Ovary (tissue), 10 donors: ENCODE measurements at regions of chr1 and their contacts with region 1.

Region 1: DNA sequence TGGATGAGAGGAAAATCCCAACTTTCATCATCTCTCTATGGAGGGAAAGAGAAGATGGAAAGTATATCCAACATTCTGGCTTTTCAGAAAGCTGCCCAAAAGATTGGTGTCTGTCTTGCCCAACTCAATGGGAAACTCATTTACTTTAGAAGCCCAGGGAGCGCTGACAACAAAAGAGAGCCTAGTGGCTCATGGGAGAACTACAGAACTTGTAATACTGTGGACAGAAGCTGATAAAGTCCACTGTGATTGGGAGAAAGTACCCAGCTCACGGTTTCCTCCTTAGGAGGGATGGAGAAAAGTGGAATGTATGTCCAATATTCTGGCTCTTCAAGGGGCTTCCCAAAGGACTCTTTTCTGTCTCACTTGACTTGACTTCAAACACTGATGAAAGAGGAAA is 66.0 kb downstream of the RGS21 start:
- DNase-seq: no peak
- H3K4me3 ChIP-seq: no peak overlapping the region
- H3K27ac ChIP-seq: no peak overlapping the region
- H3K4me1 ChIP-seq: no peaks in the 10 kb centered on the region
- H3K27me3 ChIP-seq: no peaks in the 10 kb centered on the region
- CTCF ChIP-seq: no peak
- EP300 ChIP-seq: no peak
- POLR2A ChIP-seq: no peak

Region 2: DNA sequence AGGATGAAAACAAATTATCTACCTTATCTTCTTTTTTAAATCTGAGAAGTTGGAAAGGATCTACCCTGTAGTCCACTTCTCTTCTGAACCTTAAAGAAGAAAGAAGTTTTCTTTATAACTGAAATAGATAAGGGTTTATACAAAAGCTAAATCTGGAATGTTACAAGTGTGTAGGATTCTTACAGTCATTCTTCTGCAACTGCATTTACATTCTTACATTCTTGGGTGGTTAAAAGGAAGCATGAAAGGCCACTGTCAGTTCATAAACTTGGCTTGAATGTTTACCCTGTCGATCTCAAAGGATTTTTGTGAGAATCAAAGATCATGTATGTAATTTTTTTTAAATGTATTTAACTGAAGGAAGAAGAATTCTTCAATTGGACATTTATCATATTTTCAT is 1763.0 kb before region 1 on chr1:
- intact Hi-C with region 1: loop called in 1 of 4 experiments (anchors 5 kb)
- DNase-seq: no peak
- H3K4me3 ChIP-seq: no peak overlapping the region
- H3K27ac ChIP-seq: no peak overlapping the region
- H3K4me1 ChIP-seq: no peaks in the 10 kb centered on the region
- H3K27me3 ChIP-seq: no peaks in the 10 kb centered on the region
- CTCF ChIP-seq: no peak
- EP300 ChIP-seq: no peak
- POLR2A ChIP-seq: no peak

Region 3: DNA sequence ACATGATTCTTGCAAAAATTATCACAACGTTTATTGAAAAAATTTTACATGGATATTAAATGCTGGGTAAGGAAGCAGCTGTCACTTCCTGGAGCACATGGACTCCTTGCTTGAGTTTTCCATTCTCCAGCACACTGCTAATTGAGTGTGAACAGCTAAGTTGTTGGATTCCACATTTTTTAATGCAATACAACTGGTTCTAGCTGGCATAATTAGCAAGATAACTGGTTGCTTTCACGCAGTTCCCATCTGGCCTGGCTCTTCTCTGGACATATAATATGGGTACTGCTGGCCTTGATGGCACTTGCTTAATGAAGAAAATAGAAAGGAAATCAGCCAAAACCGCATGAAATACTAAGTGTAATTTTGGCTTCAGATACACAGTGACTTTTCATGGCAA is 39.4 kb before region 1 on chr1:
- intact Hi-C with region 1: no loop called
- DNase-seq: no peak
- H3K4me3 ChIP-seq: no peak overlapping the region
- H3K27ac ChIP-seq: no peak overlapping the region
- H3K4me1 ChIP-seq: no peaks in the 10 kb centered on the region
- H3K27me3 ChIP-seq: no peaks in the 10 kb centered on the region
- CTCF ChIP-seq: no peak
- EP300 ChIP-seq: no peak
- POLR2A ChIP-seq: no peak